Activated CD4-positive, alpha-beta T cell treated with anti-CD3 and anti-CD28 coated beads for 36 hours (primary cell): ENCODE measurements at regions of chr1 and their contacts with region 1.

Region 1: GRCh38 chr1:53278201-53278725 is 39.9 kb upstream of the MAGOH start:
- DNase-seq: peak; percentile 80
- ATAC-seq: peak; percentile 72
- H3K4me3 Mint-ChIP-seq: no peak overlapping the region
- H3K27ac Mint-ChIP-seq: no peak overlapping the region
- H3K4me1 Mint-ChIP-seq: no peaks in the 10 kb centered on the region
- H3K27me3 Mint-ChIP-seq: no peaks in the 10 kb centered on the region

Region 2: GRCh38 chr1:52899445-52899894 is 378.8 kb before region 1 on chr1:
- CTCF ChIA-PET with region 1: no interaction called
- POLR2A ChIA-PET with region 1: no interaction called
- intact Hi-C with region 1: no loop called
- DNase-seq: no peak
- ATAC-seq: no peak
- H3K4me3 Mint-ChIP-seq: no peak overlapping the region
- H3K27ac Mint-ChIP-seq: no peak overlapping the region
- H3K4me1 Mint-ChIP-seq: no peaks in the 10 kb centered on the region
- H3K27me3 Mint-ChIP-seq: no peaks in the 10 kb centered on the region

Region 3: GRCh38 chr1:53121319-53122172 is 156.7 kb before region 1 on chr1:
- CTCF ChIA-PET with region 1: no interaction called
- POLR2A ChIA-PET with region 1: no interaction called
- intact Hi-C with region 1: no loop called
- DNase-seq: peak; percentile 55
- ATAC-seq: peak; percentile 73
- H3K4me3 Mint-ChIP-seq: no peak overlapping the region
- H3K27ac Mint-ChIP-seq: no peak overlapping the region
- H3K4me1 Mint-ChIP-seq: peaks cover 3% of the 10 kb centered on the region
- H3K27me3 Mint-ChIP-seq: no peaks in the 10 kb centered on the region

Region 4: GRCh38 chr1:53393325-53393792 is 115.1 kb after region 1 on chr1:
- CTCF ChIA-PET with region 1: interaction called, 63 read pairs
- POLR2A ChIA-PET with region 1: no interaction called
- intact Hi-C with region 1: loop called (anchors 1 kb)
- DNase-seq: peak; percentile 83
- ATAC-seq: peak; percentile 94
- H3K4me3 Mint-ChIP-seq: no peak overlapping the region
- H3K27ac Mint-ChIP-seq: no peak overlapping the region
- H3K4me1 Mint-ChIP-seq: no peaks in the 10 kb centered on the region
- H3K27me3 Mint-ChIP-seq: no peaks in the 10 kb centered on the region

Region 5: GRCh38 chr1:53475639-53476038 is 197.4 kb after region 1 on chr1:
- CTCF ChIA-PET with region 1: no interaction called
- POLR2A ChIA-PET with region 1: no interaction called
- intact Hi-C with region 1: loop called in 1 of 2 experiments (anchors 2 kb)
- DNase-seq: no peak
- ATAC-seq: no peak
- H3K4me3 Mint-ChIP-seq: no peak overlapping the region
- H3K27ac Mint-ChIP-seq: no peak overlapping the region
- H3K4me1 Mint-ChIP-seq: no peaks in the 10 kb centered on the region
- H3K27me3 Mint-ChIP-seq: no peaks in the 10 kb centered on the region